ENCODE measurements at regions of chr10 and their contacts with region 1.

Region 1: DNA sequence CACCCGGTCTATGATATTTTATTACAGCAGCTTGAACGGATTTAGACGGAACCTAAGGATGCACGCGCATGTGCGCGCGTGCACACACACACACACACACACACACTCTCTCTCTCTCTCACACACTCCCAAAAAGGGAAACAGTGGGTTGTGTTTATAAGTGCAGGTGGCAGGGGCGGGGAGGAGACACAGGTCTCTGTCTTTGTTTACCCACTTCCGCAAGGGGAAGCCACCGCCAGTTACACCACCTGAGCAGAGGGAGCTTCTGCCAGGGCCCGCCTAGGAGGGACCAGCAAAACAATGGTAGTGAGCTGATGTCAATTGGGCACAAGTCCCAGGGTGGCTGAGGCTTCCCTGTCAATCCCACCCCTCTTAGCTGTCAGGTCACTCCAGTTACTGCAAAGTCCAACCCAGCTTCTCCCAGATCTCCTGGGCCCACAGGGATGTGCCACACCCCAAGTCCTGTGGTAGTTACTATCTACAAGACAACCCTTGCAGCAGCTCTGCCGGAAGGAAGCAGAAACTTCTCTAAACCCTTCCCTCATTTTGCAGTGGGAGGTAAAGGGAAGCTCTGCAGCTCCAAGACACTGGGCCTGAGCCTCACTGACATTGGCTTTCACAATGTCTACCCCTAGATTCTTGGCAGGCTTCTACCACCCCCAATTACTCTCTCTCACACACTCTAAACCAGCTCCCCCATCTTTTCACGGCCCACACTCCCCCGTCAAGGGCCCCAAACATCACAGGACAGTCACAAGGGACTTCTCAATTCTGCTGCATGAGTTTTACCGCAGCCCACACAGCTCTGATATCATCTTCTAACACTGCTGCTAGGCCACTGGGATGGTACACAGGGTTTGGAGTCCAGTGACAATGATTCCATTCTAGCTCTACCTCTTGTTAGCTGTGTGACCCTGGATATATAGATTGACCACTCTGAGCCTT is 17.6 kb downstream of the ANXA11 start:
- DNase-seq: peak; percentile 94
- H3K4me3 Mint-ChIP-seq: peak overlapping the region; percentile 76
- H3K27ac Mint-ChIP-seq: peak overlapping the region; percentile 89
- H3K4me1 Mint-ChIP-seq: peaks cover 71% of the 10 kb centered on the region
- H3K27me3 Mint-ChIP-seq: no peaks in the 10 kb centered on the region

Region 2: GRCh38 chr10:80078448-80079311 is 109.1 kb before region 1 on chr10 and contains the start of gene TMEM254:
- intact Hi-C with region 1: loop called (anchors 5 kb)
- DNase-seq: peak; percentile 97
- H3K4me3 Mint-ChIP-seq: peak within 1 kb of the TSS; percentile 97
- H3K27ac Mint-ChIP-seq: peak within 1 kb of the TSS; percentile 97
- H3K4me1 Mint-ChIP-seq: peaks cover 23% of the 10 kb centered on the region
- H3K27me3 Mint-ChIP-seq: no peaks in the 10 kb centered on the region
- total RNA-seq, gene TMEM254: 13.1 and 14.8 TPM in 2 replicates

Measured in activated CD4-positive, alpha-beta T cell treated with anti-CD3 and anti-CD28 coated beads, Interleukin-2, amount 10 ng/mL, durations not matched to agents 24 days and 14 days (primary cell).